ENCODE measurements at regions of chr9 and their contacts with region 1.

Region 1: DNA sequence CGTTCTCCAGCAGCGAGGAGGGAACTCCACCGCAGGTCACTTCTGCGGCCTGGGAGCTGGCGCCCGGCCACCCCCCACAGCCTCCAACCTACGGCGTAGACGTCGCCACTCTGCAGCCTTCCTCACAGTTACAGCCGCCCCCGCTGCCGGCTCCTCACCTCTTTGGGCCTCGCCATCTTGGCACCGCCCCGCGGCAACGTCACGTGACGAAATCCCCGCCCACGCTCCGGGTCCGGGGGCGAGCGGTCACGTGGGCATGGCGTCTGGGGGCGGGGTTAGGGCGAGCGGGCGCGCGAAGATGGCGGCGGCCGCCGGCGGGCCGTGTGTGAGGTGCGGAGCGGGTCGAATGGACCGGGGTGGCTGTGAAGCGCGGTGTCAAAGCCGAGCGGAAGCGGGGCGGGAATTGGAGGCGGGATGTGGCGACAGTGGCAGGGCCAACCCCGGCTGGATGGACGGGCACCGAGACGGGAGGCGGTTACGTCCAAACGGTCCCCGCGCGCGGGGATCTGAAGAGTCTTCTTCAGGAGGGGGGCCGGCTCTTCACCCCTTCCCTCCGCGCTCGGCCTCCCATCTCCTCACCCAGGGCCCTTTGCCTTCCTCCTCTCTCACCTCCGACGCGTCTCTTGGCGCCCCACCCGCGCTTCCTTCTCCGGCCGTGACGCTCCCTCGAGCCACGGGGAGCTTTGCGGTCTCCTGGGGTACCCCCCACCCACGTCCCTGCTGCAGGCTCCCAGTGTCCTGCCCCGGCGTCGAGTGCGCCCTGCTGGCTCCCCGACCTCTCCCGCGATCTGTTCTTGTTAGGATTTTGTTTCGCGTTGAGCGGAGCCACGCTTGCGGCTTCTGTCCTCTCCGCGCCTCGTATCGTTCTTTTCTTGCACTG is at the starts of genes DOLK and NUP188:
- DNase-seq: peak; percentile 98
- ATAC-seq: peak; percentile 91 to 95 (median 92)
- H3K4me3 ChIP-seq: peak within 1 kb of the TSS; percentile 99
- H3K27ac ChIP-seq: peak within 1 kb of the TSS; percentile 93
- H3K4me1 ChIP-seq: peaks cover 8% of the 10 kb centered on the region
- H3K27me3 ChIP-seq: no peaks in the 10 kb centered on the region
- CTCF ChIP-seq: no peak
- total RNA-seq, gene DOLK: 4.5 to 9.0 (median 6.5) TPM
- total RNA-seq, gene NUP188: 17.2 to 25.9 (median 25.4) TPM

Region 2: GRCh38 chr9:128349125-128349524 is 598.5 kb before region 1 on chr9:
- intact Hi-C with region 1: no loop called
- DNase-seq: no peak
- ATAC-seq: no peak
- H3K4me3 ChIP-seq: no peak overlapping the region
- H3K27ac ChIP-seq: no peak overlapping the region
- H3K4me1 ChIP-seq: no peaks in the 10 kb centered on the region
- H3K27me3 ChIP-seq: no peaks in the 10 kb centered on the region
- CTCF ChIP-seq: no peak

Region 3: DNA sequence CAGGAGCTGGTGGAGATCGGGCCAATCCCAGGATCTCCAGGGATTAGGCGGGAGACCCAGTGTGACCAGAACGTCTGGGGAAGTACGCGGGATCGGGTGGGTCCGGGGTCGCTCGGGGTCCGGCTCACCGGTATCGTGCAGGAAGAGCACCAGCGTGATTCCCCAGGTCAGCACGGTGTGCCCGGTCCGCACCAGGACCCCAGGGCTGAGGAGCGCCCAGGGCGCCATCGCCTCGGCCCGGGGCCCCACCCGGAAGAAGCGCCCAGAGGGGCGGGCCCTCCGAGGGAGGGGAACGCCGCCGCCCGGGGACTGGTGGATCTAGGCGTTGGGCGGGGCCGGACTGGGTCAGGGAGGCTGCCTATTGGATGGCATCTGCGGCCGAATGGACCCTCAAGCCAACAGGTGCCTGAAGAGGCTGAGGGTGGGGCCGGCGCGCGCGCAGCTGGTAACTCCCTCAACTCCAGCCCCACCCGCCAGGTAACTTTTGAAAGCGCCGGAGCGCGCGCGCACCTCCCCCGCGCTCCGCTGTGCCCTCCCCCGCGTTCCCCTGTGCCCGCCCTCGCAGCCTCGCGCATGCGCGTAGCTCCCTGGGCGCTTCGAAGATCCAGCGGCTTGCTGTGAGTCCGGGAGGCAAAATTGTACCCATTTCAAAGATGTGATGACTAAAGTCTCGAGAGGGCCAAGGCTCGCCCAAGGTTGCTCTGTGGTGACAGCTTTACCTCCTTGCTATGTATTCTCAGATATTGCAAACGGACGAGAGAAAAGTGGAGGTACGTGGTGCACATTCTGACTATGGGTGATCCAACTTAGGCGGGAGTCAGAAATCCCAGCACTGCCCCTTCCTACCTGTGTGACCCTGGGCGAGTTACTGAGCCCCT is 223.6 kb before region 1 on chr9 and contains the start of gene ZDHHC12:
- intact Hi-C with region 1: loop called in 1 of 2 experiments (anchors 10 kb)
- DNase-seq: peak; percentile 97
- ATAC-seq: peak; percentile 96 to 97 (median 97)
- H3K4me3 ChIP-seq: peak within 1 kb of the TSS; percentile 65
- H3K27ac ChIP-seq: peak within 1 kb of the TSS; percentile 37
- H3K4me1 ChIP-seq: peaks cover 8% of the 10 kb centered on the region
- H3K27me3 ChIP-seq: no peaks in the 10 kb centered on the region
- CTCF ChIP-seq: no peak
- total RNA-seq, gene ZDHHC12: 4.5 to 7.2 (median 5.0) TPM

Region 4: DNA sequence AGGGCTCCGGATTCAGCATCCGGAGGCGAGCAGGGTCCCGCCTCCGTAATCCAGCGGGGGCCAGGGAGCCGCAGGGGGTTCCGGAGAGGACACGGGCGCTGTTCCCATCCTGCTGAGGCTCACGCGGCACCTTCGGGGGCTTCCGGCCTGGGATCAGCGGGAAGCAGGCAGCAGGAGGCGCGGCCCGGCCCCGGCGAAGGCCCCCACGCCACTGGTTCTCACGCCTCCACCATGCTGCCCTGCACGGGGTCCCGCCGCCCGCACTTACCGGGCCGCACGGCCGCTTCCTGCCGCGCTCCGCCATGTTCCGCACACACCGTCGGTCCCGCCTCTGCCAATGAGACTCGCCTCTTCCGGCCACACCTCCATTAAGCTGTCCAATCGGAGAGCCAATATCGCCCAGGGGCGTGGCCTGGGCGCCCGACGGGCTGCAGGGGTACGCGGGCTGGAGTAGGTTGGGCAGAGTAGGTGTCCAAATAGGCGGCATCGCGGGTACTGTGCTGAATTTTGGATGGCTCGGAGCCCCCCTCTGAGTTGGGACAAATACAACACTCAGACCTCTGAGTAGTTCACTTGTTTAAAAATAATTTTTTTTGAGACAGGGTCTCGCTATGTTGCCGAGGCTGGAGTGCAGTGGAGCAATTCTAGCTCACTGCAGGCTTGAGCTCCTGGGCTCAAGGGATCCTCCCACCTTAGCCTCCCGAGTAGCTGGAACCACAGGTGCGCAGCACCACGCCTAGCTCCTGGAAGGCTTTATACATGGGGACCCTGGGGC is 118.0 kb before region 1 on chr9 and contains the start of gene SPOUT1:
- intact Hi-C with region 1: no loop called
- DNase-seq: peak; percentile 91 to 96
- ATAC-seq: peak; percentile 98 to 100 (median 99)
- H3K4me3 ChIP-seq: peak within 1 kb of the TSS; percentile 89
- H3K27ac ChIP-seq: peak within 1 kb of the TSS; percentile 86
- H3K4me1 ChIP-seq: peaks cover 13% of the 10 kb centered on the region
- H3K27me3 ChIP-seq: no peaks in the 10 kb centered on the region
- CTCF ChIP-seq: no peak
- total RNA-seq, gene SPOUT1: 13.3 to 33.0 (median 20.6) TPM

Region 5: DNA sequence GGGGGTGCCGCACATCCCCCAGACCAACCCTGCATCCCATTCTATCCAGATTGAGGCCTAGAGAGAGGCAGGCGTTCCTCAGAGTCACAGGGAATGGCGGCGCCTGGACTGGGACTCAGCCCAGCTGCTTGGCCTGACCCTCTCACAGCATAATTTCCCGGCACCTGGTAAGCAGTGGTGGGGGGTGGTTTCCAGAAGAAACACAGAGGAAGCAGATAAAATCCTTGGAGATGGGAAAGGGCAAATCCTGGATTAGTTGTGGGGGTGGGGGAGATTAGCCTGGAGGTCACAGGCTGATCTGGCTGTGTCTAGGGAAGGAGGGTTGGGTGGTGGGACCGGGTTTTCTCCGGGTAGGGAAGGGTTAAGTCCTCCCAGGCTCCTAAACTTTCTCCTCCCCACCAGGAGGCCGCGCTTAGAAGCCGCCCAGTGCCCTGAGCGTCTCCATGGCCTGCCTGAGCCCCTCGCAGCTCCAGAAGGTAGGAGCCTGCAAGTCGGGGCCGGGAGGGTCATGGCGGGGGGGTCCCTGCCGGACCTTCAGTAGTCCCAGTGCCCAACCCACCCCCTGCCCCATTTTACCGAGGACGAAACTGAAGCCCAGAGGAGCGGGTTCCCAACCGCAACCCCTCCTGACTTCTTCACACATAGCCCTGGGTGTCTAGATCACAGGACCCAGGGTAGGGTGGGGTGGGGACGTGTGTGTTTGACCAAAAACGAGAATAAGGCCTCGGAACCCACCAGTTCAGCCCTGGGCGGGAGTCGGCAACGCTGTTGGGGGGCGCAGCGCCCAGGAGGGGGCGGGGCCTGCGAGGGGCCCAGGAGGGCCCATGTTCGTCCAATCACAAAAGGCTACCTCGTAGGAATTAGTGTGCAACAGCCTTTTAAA is 25.5 kb before region 1 on chr9:
- intact Hi-C with region 1: loop called in 1 of 2 experiments (anchors 1 kb)
- DNase-seq: peak; percentile 56 to 78
- ATAC-seq: peak; percentile 45 to 70 (median 58)
- H3K4me3 ChIP-seq: peak overlapping the region; percentile 71
- H3K27ac ChIP-seq: peak overlapping the region; percentile 82
- H3K4me1 ChIP-seq: peaks cover 14% of the 10 kb centered on the region
- H3K27me3 ChIP-seq: no peaks in the 10 kb centered on the region
- CTCF ChIP-seq: no peak

Region 6: GRCh38 chr9:129028192-129028957 is 80.7 kb after region 1 on chr9 and contains the start of gene SH3GLB2:
- intact Hi-C with region 1: loop called in 1 of 2 experiments (anchors 5 kb)
- DNase-seq: peak; percentile 93 to 98
- ATAC-seq: peak; percentile 88 to 93 (median 90)
- H3K4me3 ChIP-seq: peak within 1 kb of the TSS; percentile 92
- H3K27ac ChIP-seq: peak within 1 kb of the TSS; percentile 88
- H3K4me1 ChIP-seq: peaks cover 20% of the 10 kb centered on the region
- H3K27me3 ChIP-seq: no peaks in the 10 kb centered on the region
- CTCF ChIP-seq: peak; percentile 91
- total RNA-seq, gene SH3GLB2: 33.8 to 56.8 (median 45.1) TPM

Measured in psoas muscle (tissue), 8 donors.